Activated CD4-positive, alpha-beta memory T cell treated with anti-CD3 and anti-CD28 coated beads for 36 hours (primary cell): ENCODE measurements at regions of chr2 and their contacts with region 1.

Region 1: DNA sequence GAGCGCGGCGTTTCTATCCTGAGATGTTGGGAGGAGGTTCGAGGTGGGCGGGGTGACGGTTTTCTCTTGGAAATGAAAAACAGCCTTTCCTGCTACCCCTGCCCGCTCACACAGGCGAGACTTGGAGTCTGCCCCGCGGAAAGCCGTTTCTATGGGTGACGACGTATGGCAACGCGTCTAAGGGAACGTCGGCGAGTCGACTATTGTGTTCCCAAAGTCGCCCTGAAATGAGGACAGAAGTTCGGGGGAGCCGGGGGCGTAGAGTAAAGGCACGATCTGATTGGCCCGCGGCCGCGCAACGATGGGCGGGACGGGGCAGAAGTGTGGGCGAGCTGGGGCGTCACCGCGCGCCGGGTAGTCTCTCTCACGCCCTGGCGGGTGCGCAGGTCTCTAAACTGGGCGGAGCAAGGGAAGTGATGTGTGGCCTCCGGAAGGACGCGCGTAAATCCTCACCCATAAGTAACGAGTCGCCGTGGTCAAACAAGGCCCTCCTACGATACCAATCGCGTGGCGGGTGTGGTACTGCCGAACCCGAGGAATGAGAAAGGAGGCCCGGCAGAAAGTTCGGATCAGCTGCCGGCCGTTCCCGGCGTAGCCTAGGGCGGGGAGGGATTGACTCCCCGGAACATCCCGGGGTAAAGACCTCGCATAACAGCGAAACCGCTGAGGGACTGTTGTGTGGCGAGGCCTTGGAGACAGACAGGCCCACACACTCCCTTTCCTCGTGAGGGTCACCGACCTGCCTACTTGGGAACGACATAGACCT is 89.6 kb downstream of the FAM161A start:
- DNase-seq: peak; percentile 99
- H3K4me3 Mint-ChIP-seq: peak overlapping the region; percentile 90
- H3K27ac Mint-ChIP-seq: peak overlapping the region; percentile 95
- H3K4me1 Mint-ChIP-seq: peaks cover 17% of the 10 kb centered on the region
- H3K27me3 Mint-ChIP-seq: peaks cover under 1% of the 10 kb centered on the region

Region 2: GRCh38 chr2:61426267-61426897 is 337.8 kb before region 1 on chr2:
- CTCF ChIA-PET with region 1: no interaction called
- POLR2A ChIA-PET with region 1: no interaction called
- intact Hi-C with region 1: loop called (anchors 10 kb)
- DNase-seq: peak; percentile 84
- H3K4me3 Mint-ChIP-seq: no peak overlapping the region
- H3K27ac Mint-ChIP-seq: peak overlapping the region; percentile 64
- H3K4me1 Mint-ChIP-seq: peaks cover 57% of the 10 kb centered on the region
- H3K27me3 Mint-ChIP-seq: no peaks in the 10 kb centered on the region

Region 3: DNA sequence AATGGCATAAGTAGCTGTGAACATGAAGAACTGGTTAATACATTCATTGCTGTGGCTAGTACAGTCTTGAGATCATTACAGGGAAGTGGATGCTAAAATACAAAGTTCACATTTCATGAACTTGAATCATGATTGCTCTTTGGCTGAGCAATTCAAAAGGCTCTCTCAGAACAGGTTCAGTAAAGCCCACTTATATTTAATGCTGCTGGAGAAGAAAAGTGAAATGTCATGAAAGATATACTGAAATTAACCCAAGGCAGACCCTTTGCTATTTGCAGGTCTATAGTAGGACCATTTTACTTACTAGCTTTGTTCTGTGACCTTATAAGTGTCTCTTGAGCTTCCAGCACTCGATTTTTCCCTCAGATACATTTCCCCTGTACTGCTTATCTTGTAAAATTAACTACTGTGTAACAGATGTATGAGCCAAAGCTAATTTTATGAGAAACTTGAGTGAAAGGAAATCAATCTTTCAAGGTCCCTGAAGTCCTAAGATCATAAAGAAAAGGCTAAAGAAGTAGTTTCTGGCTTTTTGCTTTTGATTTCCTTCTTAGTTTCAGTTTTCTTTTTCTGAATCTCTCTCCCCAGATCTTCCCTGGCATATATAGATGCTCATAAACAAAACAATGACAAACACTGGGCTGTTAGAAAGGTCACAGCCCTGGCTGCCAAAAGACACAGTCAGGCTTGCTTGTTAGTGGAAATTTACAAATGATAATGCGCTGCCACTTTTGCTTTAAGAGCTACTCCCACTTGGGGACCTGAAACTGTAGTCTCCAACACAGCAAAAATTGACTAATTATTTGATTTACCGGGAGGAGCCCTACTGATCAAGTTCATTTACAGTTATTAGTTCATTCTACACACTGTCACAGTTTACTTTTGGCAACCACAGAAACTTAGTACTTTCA is 93.4 kb before region 1 on chr2:
- CTCF ChIA-PET with region 1: no interaction called
- POLR2A ChIA-PET with region 1: no interaction called
- intact Hi-C with region 1: loop called (anchors 2 kb)
- DNase-seq: peak; percentile 46
- H3K4me3 Mint-ChIP-seq: peak overlapping the region; percentile 52
- H3K27ac Mint-ChIP-seq: peak overlapping the region; percentile 66
- H3K4me1 Mint-ChIP-seq: peaks cover 19% of the 10 kb centered on the region
- H3K27me3 Mint-ChIP-seq: no peaks in the 10 kb centered on the region

Region 4: GRCh38 chr2:61707969-61708852 is 56.0 kb before region 1 on chr2:
- CTCF ChIA-PET with region 1: no interaction called
- POLR2A ChIA-PET with region 1: no interaction called
- intact Hi-C with region 1: loop called (anchors 5 kb)
- DNase-seq: peak; percentile 56
- H3K4me3 Mint-ChIP-seq: no peak overlapping the region
- H3K27ac Mint-ChIP-seq: no peak overlapping the region
- H3K4me1 Mint-ChIP-seq: peaks cover 5% of the 10 kb centered on the region
- H3K27me3 Mint-ChIP-seq: no peaks in the 10 kb centered on the region

Region 5: DNA sequence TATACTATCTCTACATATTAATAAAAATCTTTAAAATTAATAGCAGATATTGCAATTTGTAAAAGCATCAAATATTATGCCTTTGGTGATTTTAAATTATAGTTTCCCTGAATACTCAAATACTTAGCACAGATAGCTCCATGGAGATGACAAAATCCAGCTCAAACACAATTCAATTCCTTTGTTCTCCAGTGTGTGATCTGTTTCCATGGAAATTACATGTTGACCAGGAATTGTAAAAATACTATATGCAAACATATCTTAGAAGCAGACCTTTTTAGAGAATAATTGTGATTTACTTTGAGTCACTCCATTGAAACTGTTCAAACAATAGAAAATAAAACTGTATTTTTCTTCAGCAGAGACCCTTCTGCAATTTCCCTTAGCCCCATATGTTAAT is 21.4 kb after region 1 on chr2:
- CTCF ChIA-PET with region 1: no interaction called
- POLR2A ChIA-PET with region 1: no interaction called
- intact Hi-C with region 1: no loop called
- DNase-seq: no peak
- H3K4me3 Mint-ChIP-seq: no peak overlapping the region
- H3K27ac Mint-ChIP-seq: no peak overlapping the region
- H3K4me1 Mint-ChIP-seq: no peaks in the 10 kb centered on the region
- H3K27me3 Mint-ChIP-seq: peaks cover 5% of the 10 kb centered on the region

Region 6: GRCh38 chr2:61888267-61889055 is 124.2 kb after region 1 on chr2 and contains the start of gene CCT4:
- CTCF ChIA-PET with region 1: no interaction called
- POLR2A ChIA-PET with region 1: interaction called, 3 read pairs
- intact Hi-C with region 1: loop called (anchors 5 kb)
- DNase-seq: peak; percentile 92
- H3K4me3 Mint-ChIP-seq: peak within 1 kb of the TSS; percentile 99
- H3K27ac Mint-ChIP-seq: peak within 1 kb of the TSS; percentile 99
- H3K4me1 Mint-ChIP-seq: peaks cover 26% of the 10 kb centered on the region
- H3K27me3 Mint-ChIP-seq: no peaks in the 10 kb centered on the region
- total RNA-seq, gene CCT4: 345 to 352 TPM

Region 7: GRCh38 chr2:62055724-62056336 is 291.6 kb after region 1 on chr2:
- CTCF ChIA-PET with region 1: no interaction called
- POLR2A ChIA-PET with region 1: no interaction called
- intact Hi-C with region 1: no loop called
- DNase-seq: no peak
- H3K4me3 Mint-ChIP-seq: no peak overlapping the region
- H3K27ac Mint-ChIP-seq: no peak overlapping the region
- H3K4me1 Mint-ChIP-seq: peaks cover 16% of the 10 kb centered on the region
- H3K27me3 Mint-ChIP-seq: no peaks in the 10 kb centered on the region